PC-9 (cell line): ENCODE measurements at regions of chr1 and their contacts with region 1.

Region 1: DNA sequence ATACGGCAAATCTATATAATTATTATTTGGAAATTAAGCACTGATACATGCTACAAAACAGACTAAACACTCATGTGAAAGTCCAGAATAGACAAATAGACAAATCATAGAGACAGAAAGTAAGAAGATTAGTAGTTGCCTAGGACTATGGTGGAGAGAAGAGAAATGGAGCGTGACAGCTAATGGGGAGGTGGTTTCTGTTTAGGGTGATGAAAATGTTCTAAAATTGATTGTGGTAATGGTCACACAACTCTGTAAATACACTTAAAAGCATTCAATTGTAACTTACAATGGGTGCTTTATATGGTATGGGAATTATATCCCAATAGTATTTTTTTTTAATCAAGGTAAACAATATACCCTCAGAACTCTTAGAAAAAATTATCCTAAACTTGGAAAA is 20.4 kb upstream of the ITLN2 start:
- DNase-seq: no peak
- H3K4me3 ChIP-seq: no peak overlapping the region
- H3K27ac ChIP-seq: no peak overlapping the region
- H3K4me1 ChIP-seq: no peaks in the 10 kb centered on the region
- H3K27me3 ChIP-seq: 0 out of 2 replicates have a peak, but pooled peaks cover 3% of the 10 kb centered on the region
- CTCF ChIP-seq: no peak

Region 2: DNA sequence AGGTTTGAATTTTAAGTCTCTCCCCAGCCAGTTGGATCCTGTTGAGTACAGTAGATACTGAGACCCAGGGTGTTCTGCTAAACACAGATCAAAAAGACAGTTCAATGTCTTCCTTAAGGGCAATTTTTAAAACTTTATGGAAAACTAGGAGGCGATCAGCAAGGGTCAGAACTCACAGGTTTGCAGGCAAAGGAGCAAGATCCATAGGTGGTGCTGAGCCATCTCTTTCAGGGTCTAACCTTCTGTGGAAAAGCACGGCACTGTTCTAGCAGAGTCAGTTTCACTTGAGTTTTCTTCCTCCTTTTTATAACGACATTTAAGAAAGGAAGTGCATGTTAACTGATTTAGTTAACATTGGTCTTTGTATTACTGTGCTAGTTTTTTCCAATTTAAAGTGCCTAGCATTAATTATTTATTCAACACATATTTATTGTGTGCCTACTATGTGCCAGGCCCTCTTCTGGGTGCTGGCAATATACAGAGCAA is 395.8 kb before region 1 on chr1 and contains the start of gene CD84:
- CTCF ChIA-PET with region 1: no interaction called
- POLR2A ChIA-PET with region 1: no interaction called
- intact Hi-C with region 1: no loop called
- DNase-seq: no peak
- H3K4me3 ChIP-seq: no peak within 1 kb of the TSS
- H3K27ac ChIP-seq: no peak within 1 kb of the TSS
- H3K4me1 ChIP-seq: no peaks in the 10 kb centered on the region
- H3K27me3 ChIP-seq: peaks cover 10% of the 10 kb centered on the region; the same call in 1 of the 2 replicates
- CTCF ChIP-seq: no peak
- total RNA-seq, gene CD84: not detected in 2 replicates

Region 3: GRCh38 chr1:161201828-161202725 is 227.1 kb after region 1 on chr1 and contains the start of gene NDUFS2:
- CTCF ChIA-PET with region 1: no interaction called
- POLR2A ChIA-PET with region 1: interaction called, 13 read pairs
- intact Hi-C with region 1: no loop called
- DNase-seq: peak; percentile 89 to 95
- H3K4me3 ChIP-seq: peak within 1 kb of the TSS; percentile 90
- H3K27ac ChIP-seq: peak within 1 kb of the TSS; percentile 78
- H3K4me1 ChIP-seq: peaks cover 19% of the 10 kb centered on the region
- H3K27me3 ChIP-seq: no peaks in the 10 kb centered on the region
- CTCF ChIP-seq: no peak; the same call in 1 of the 2 replicates
- total RNA-seq, gene NDUFS2: 99.5 and 107 TPM in 2 replicates

Region 4: DNA sequence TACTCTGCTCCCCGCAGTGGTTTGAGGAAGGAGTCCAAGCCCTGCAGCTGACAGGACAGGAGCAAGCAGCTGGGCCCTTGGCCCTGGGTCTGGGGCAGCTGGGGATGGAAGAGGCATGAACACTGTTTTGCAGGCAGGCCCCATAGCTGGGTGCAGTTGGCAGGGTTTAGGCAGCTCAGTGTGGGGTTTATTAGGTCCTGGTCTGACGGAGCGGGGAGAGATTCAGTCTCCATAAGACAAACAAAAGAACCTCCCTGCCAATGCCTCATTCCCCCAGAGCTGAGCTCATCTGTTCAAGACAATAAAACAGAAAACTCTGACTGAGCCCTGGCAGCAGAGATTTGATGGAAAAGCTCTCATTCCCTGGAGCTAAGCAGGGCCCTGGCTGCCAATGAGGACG is 1011.3 kb after region 1 on chr1:
- CTCF ChIA-PET with region 1: no interaction called
- POLR2A ChIA-PET with region 1: no interaction called
- intact Hi-C with region 1: no loop called
- DNase-seq: no peak
- H3K4me3 ChIP-seq: no peak overlapping the region
- H3K27ac ChIP-seq: no peak overlapping the region
- H3K4me1 ChIP-seq: no peaks in the 10 kb centered on the region
- H3K27me3 ChIP-seq: peaks cover 21% of the 10 kb centered on the region
- CTCF ChIP-seq: no peak